ENCODE measurements at regions of chr1 and their contacts with region 1.

Region 1: GRCh38 chr1:107963601-107964335 is 1.2 kb downstream of the VAV3 start:
- DNase-seq: peak; percentile 70
- ATAC-seq: peak; percentile 62
- H3K4me3 Mint-ChIP-seq: peak overlapping the region; percentile 93
- H3K27ac Mint-ChIP-seq: peak overlapping the region; percentile 99
- H3K4me1 Mint-ChIP-seq: peaks cover 61% of the 10 kb centered on the region
- H3K27me3 Mint-ChIP-seq: no peaks in the 10 kb centered on the region
- CTCF ChIP-seq: no peak

Region 2: DNA sequence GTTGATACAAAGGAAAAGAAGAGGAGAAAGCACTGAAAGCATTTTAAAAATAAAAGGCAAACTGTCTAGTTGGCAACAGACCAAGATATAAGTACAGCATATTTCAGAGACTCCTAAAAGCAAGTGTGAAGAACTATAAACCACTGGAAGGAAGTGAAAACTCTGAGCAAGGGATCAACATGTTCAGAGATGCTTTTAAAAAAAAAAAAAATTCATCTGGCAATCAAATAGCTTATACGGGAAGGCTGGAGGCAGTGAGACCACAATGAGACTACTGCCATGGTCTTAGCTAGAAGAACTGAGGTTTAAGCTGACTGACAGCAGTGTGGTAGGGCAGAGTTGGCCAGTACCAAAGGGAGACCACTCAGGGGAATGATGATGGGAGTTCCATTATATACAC is 123.0 kb before region 1 on chr1:
- CTCF ChIA-PET with region 1: interaction called, 7 read pairs
- POLR2A ChIA-PET with region 1: interaction called, 11 read pairs
- intact Hi-C with region 1: loop called (anchors 2 kb)
- DNase-seq: no peak
- ATAC-seq: peak; percentile 46
- H3K4me3 Mint-ChIP-seq: peak overlapping the region; percentile 67
- H3K27ac Mint-ChIP-seq: peak overlapping the region; percentile 75
- H3K4me1 Mint-ChIP-seq: peaks cover 89% of the 10 kb centered on the region
- H3K27me3 Mint-ChIP-seq: no peaks in the 10 kb centered on the region
- CTCF ChIP-seq: no peak

Region 3: GRCh38 chr1:107936498-107937481 is 27.0 kb before region 1 on chr1:
- CTCF ChIA-PET with region 1: interaction called, 4 read pairs
- POLR2A ChIA-PET with region 1: interaction called, 23 read pairs
- intact Hi-C with region 1: loop called (anchors 1 kb)
- DNase-seq: no peak
- ATAC-seq: peak; percentile 51
- H3K4me3 Mint-ChIP-seq: peak overlapping the region; percentile 69
- H3K27ac Mint-ChIP-seq: peak overlapping the region; percentile 70
- H3K4me1 Mint-ChIP-seq: peaks cover 87% of the 10 kb centered on the region
- H3K27me3 Mint-ChIP-seq: no peaks in the 10 kb centered on the region
- CTCF ChIP-seq: no peak

Region 4: GRCh38 chr1:108041360-108042142 is 77.8 kb after region 1 on chr1:
- CTCF ChIA-PET with region 1: no interaction called
- POLR2A ChIA-PET with region 1: interaction called, 5 read pairs
- intact Hi-C with region 1: loop called (anchors 2 kb)
- DNase-seq: no peak
- ATAC-seq: peak; percentile 54
- H3K4me3 Mint-ChIP-seq: peak overlapping the region; percentile 55
- H3K27ac Mint-ChIP-seq: peak overlapping the region; percentile 82
- H3K4me1 Mint-ChIP-seq: peaks cover 39% of the 10 kb centered on the region
- H3K27me3 Mint-ChIP-seq: no peaks in the 10 kb centered on the region
- CTCF ChIP-seq: no peak

Region 5: GRCh38 chr1:108125312-108126138 is 161.8 kb after region 1 on chr1:
- CTCF ChIA-PET with region 1: interaction called, 30 read pairs
- POLR2A ChIA-PET with region 1: interaction called, 3 read pairs
- intact Hi-C with region 1: loop called (anchors 1 kb)
- DNase-seq: peak; percentile 42
- ATAC-seq: peak; percentile 91
- H3K4me3 Mint-ChIP-seq: no peak overlapping the region
- H3K27ac Mint-ChIP-seq: peak overlapping the region; percentile 2
- H3K4me1 Mint-ChIP-seq: peaks cover 4% of the 10 kb centered on the region
- H3K27me3 Mint-ChIP-seq: no peaks in the 10 kb centered on the region
- CTCF ChIP-seq: peak; percentile 97